Left cardiac atrium (tissue), 4 donors: ENCODE measurements at regions of chr1 and their contacts with region 1.

Region 1: DNA sequence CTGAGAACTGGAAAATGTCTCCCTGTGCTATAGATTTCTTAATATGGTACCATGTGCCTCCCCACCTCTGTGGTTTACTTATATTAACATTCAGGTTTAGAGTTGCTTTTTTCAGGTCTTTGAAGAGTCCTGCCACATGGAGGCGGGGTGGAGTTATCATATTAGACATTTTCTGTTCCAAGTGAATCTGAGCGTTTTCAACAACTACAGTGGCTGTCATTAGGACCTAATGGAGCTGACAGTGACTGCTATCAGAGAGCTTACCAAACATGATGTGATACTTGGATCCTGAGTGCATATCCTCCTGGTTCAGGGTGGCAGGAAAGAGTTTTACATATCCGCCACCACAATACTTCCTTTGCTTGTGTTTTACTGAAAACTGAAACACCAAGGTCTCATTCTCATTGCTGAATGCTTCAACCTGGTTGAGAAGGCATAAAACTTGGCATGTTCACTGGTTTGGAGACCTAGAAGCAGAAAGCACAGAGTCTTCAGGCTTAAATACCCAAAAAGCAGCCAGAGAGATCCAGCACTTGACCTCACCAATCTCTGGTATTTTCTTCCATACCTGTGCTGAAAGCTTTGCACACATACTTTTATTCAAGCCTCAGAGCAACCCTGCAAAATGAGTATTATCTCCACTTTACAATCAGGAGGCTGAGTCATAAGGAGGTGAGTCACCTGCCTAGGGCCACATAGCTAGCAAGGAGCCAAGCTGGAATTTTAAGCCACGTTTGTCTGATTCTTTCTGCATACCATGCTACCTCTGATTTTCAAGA is 47.4 kb upstream of the OSBPL9 start:
- DNase-seq: no peak
- ATAC-seq: peak; percentile 48 to 65

Region 2: DNA sequence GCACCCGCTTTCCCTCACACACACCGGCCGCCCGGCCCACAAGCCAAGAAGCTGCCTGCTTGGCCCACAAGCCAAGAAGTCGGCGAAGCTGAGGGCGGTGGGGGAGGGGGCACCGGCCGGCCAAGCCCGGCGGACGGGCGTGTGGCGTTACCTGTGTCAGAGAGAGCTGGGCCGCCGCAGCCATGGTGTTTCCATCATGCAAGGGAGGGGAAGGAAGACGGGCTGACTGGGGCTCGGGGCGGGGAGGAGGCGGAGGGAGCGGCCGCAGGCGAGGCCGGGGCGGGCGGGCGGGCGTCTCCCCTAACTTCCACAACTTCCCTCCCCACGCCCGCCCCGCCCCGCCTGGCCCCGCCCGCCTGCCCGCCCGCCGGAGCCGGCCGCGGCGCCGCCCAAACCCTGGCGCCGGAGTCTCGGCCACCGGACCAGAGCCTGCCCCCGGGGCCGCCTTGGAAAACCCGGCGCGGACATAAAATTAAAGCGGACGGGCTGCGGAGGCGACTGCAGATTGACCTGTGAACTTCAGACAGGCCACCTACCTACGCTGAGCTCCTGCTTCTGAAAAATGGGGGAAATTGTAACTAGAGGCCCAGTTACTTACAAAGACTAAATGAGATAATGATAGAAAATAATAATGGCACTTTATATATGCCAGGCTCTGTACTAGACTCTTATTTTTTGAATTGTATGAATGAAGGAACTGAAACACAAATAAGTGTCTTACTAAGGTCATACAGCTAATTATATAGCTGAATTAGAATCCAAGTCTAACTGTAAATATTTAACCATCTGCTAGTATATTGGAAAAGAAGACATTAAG is 50.2 kb before region 1 on chr1 and contains the start of gene EPS15:
- intact Hi-C with region 1: no loop called
- DNase-seq: peak; percentile 88
- ATAC-seq: peak; percentile 84 to 90
- total RNA-seq, gene EPS15: 59.5 to 64.8 TPM

Region 3: GRCh38 chr1:51616901-51617708 is 47.6 kb after region 1 on chr1 and contains the start of gene OSBPL9:
- intact Hi-C with region 1: loop called in 1 of 2 experiments (anchors 5 kb)
- DNase-seq: peak; percentile 93
- ATAC-seq: peak; percentile 96 to 97
- total RNA-seq, gene OSBPL9: 39.3 to 45.1 TPM

Region 4: DNA sequence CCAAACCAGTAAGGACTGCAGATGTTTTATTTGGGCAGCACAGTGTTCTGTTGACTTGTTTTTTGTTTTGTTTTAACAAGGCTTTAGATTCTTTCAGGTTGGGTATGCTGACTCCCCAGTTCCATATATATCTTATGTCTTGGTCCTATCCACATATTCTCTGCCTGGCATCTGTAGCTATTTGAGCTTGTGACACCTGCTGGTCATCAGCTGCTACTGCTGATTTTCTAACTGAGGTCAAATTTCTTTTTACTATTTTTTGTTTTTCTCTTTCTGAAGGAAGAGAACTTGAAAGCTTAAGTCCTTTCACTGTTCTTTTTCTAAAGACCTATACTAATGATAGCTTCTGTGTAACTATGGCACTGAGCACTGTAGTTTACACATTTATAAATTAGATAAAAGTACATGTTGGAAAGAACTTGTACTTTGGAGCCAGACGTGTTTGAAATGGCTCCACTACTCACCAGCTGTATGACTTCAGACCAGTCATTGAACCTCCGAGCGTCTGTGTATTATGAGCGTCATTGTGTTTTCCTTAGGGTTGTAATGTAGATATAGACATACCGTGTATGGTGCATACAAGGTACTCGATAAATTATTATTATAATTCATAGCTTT is 199.6 kb after region 1 on chr1:
- intact Hi-C with region 1: loop called in 1 of 2 experiments (anchors 10 kb)
- DNase-seq: no peak
- ATAC-seq: peak; percentile 76 to 77